CD14-positive monocyte (primary cell): ENCODE measurements at regions of chr4 and their contacts with region 1.

Region 1: GRCh38 chr4:38319456-38320342 is 344.3 kb upstream of the KLF3 start:
- DNase-seq: peak; percentile 76 to 83 (median 77)
- H3K4me3 ChIP-seq: peak overlapping the region in 1 of 3 experiments; percentile 74
- H3K4me3 Mint-ChIP-seq: peak overlapping the region; percentile 68 to 84
- H3K27ac ChIP-seq: peak overlapping the region; percentile 79 to 87
- H3K27ac Mint-ChIP-seq: peak overlapping the region; percentile 87 to 95 (median 91)
- H3K4me1 ChIP-seq: peaks cover 44 to 59% of the 10 kb centered on the region in 2 donors
- H3K4me1 Mint-ChIP-seq: peaks cover 48% of the 10 kb centered on the region
- H3K27me3 ChIP-seq: no peaks in the 10 kb centered on the region
- H3K27me3 Mint-ChIP-seq: peaks cover 0 to 2% (median 0%) of the 10 kb centered on the region in 3 donors
- CTCF ChIP-seq: peak; percentile 99

Region 2: GRCh38 chr4:38179690-38180377 is 139.9 kb before region 1 on chr4:
- intact Hi-C with region 1: loop called (anchors 10 kb)
- DNase-seq: peak; percentile 61 to 74 (median 65)
- H3K4me3 ChIP-seq: no peak overlapping the region
- H3K4me3 Mint-ChIP-seq: no peak overlapping the region
- H3K27ac ChIP-seq: no peak overlapping the region
- H3K27ac Mint-ChIP-seq: peak overlapping the region in 2 of 7 donors; percentile 24 to 56
- H3K4me1 ChIP-seq: peaks cover 33% of the 10 kb centered on the region in 2 donors
- H3K4me1 Mint-ChIP-seq: peaks cover 34% of the 10 kb centered on the region
- H3K27me3 ChIP-seq: no peaks in the 10 kb centered on the region
- H3K27me3 Mint-ChIP-seq: peaks cover 0 to 2% (median 2%) of the 10 kb centered on the region in 3 donors
- CTCF ChIP-seq: peak; percentile 96